ENCODE measurements at regions of chr13 and their contacts with region 1.

Region 1: DNA sequence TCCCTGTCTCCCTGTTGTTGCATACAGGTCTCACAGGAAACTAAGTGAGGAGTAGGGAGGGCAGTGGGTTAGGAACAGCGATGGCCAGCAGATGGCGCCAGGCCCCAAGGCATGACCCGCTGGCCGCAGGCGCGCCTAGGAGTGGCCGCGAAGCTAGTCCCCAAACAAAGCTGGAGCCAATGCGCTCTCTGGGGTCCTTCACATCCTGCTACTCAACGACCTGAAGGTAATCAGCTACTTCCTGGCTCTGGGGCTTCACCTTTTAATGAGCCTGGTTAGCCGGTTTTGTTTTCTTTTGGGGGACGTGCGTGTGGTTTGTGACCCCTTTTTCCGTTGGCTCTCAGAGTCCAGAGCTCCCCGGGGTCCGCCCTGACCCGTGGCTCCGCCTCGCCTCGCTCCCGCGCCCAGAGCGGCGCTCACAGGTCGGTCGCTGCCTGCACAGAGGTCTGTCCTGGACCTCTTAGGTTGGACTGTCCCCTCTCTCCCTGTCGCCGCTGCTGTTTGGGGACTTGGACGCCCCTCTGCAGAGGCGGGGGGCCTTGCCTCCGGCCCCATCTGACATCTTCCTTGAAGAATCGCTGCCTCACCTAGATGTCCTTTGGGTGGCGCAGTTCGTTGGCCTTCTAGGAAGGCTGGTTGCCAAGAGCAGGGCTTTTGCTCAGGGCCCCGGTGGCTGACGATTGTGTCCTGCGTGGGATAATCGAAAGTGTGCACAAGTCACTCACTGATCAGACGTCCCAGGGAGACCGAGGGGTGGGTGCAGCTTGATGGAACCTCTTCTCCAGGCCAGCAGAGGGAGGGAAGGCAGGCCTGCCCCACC is 62.1 kb upstream of the GTF3A start:
- DNase-seq: peak; percentile 83 to 96 (median 92)
- ATAC-seq: peak; percentile 94 to 98 (median 96)
- H3K4me3 ChIP-seq: peak overlapping the region; percentile 7 to 57 (median 32)
- H3K27ac ChIP-seq: peak overlapping the region in 3 of 4 donors; percentile 25 to 59 (median 48)
- H3K4me1 ChIP-seq: peaks cover 0 to 6% (median 5%) of the 10 kb centered on the region in 3 donors
- H3K27me3 ChIP-seq: no peaks in the 10 kb centered on the region
- CTCF ChIP-seq: peak; percentile 89 to 91 (median 90)

Region 2: DNA sequence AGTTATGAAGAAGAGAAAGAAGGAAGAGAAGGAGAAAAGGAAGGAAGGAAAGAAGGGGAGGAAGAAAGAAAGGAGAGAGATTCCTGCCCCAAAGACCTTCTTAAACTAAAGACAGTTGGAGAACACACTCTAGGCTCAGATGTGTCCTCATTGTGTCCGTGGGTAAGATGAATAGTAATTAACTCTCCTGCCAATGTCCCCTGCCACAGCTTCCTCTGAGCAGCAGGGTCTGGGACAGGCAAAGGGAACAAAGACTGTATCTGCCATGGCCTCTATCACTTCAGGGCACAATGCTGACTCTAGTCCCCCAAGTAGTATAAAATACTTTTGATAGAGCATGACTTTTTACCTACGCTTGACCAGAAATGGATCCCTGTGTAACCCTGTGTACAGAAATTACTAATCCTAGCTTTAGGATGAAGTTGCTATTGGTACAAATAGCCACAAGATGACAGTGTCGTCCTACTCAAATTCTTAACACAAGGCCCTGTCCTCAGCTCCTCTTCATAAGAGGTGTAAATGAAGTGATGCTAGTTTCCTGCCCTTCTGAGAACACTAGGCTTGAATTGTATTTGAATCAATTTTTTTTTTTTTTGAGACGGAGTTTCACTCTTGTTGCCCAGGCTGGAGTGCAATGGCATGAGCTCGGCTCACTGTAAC is 415.5 kb before region 1 on chr13:
- intact Hi-C with region 1: loop called in 1 of 3 experiments (anchors 10 kb)
- DNase-seq: peak in 1 of 6 donors; percentile 34
- ATAC-seq: peak; percentile 18 to 71 (median 67)
- H3K4me3 ChIP-seq: no peak overlapping the region
- H3K27ac ChIP-seq: no peak overlapping the region
- H3K4me1 ChIP-seq: peaks cover 18 to 21% (median 20%) of the 10 kb centered on the region in 3 donors
- H3K27me3 ChIP-seq: no peaks in the 10 kb centered on the region
- CTCF ChIP-seq: peak; percentile 54 to 75 (median 67)

Region 3: DNA sequence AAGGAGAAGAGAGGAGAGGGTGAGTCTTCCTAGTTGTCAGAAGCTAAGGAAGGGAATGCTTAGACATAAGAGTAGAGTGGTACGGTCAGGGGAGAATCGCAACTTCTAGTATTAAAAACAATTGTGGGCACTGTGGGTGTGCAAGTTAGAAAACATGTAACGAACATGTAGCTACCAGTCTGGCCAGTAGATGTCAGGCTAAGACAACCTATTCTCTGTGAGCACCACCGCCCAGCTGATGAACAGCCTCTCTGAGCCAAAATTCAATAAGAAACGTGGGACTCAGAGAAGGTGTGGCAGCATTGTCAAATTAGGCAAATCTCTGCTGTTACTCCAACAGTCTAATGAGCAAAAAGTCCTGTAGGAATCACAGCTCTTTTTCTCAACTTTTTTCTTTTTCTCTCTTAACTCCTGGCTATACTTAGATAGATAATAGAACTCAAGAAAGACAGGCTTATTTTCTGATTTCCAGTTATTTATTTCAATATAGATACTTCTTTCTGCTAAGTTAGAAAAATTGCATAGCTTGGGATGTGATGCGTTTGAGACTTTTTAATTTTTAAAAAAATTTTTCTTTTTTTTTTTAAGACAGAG is 376.9 kb before region 1 on chr13:
- intact Hi-C with region 1: loop called in 2 of 3 experiments (anchors 5 to 10 kb)
- DNase-seq: peak in 3 of 6 donors; percentile 65 to 81 (median 69)
- ATAC-seq: peak; percentile 49 to 83 (median 76)
- H3K4me3 ChIP-seq: no peak overlapping the region
- H3K27ac ChIP-seq: no peak overlapping the region
- H3K4me1 ChIP-seq: peaks cover 0 to 15% (median 2%) of the 10 kb centered on the region in 3 donors
- H3K27me3 ChIP-seq: no peaks in the 10 kb centered on the region
- CTCF ChIP-seq: peak; percentile 53 to 63 (median 54)

Region 4: DNA sequence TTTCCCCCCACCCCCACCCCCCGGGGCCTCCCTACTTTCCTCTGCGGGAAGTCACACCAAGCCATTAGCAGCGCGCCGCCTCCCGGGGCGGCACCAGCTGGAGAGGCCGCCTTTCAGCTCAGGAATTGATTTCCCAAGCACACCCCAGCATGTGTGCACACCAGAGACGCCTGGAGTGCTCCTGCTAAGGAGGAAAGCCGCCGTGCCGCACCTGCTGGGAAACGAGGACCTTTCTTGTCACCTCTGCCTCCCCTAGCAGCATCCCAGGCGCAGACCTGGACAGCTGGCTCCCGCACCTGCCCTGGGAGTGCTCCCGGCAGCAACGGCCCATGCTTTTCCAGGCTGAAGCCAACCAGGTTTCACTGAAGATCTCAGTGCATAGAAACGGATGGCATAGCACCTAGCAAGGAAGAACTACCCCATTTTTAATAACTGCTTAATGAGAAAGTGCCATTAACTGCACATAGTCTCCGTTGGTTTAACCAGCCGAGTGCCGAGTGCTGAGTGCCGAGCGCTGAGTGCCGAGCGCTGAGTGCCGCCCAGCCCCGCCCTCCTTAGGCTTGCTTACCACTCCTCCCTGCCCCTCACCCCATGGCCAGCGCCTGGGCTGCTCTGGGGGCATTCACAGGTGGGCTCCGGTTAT is 355.6 kb before region 1 on chr13:
- intact Hi-C with region 1: loop called in 1 of 3 experiments (anchors 10 kb)
- DNase-seq: peak; percentile 33 to 79 (median 42)
- ATAC-seq: peak; percentile 77 to 92 (median 90)
- H3K4me3 ChIP-seq: peak overlapping the region; percentile 12 to 46 (median 30)
- H3K27ac ChIP-seq: no peak overlapping the region
- H3K4me1 ChIP-seq: peaks cover 0 to 7% (median 0%) of the 10 kb centered on the region in 3 donors
- H3K27me3 ChIP-seq: no peaks in the 10 kb centered on the region
- CTCF ChIP-seq: no peak

Region 5: DNA sequence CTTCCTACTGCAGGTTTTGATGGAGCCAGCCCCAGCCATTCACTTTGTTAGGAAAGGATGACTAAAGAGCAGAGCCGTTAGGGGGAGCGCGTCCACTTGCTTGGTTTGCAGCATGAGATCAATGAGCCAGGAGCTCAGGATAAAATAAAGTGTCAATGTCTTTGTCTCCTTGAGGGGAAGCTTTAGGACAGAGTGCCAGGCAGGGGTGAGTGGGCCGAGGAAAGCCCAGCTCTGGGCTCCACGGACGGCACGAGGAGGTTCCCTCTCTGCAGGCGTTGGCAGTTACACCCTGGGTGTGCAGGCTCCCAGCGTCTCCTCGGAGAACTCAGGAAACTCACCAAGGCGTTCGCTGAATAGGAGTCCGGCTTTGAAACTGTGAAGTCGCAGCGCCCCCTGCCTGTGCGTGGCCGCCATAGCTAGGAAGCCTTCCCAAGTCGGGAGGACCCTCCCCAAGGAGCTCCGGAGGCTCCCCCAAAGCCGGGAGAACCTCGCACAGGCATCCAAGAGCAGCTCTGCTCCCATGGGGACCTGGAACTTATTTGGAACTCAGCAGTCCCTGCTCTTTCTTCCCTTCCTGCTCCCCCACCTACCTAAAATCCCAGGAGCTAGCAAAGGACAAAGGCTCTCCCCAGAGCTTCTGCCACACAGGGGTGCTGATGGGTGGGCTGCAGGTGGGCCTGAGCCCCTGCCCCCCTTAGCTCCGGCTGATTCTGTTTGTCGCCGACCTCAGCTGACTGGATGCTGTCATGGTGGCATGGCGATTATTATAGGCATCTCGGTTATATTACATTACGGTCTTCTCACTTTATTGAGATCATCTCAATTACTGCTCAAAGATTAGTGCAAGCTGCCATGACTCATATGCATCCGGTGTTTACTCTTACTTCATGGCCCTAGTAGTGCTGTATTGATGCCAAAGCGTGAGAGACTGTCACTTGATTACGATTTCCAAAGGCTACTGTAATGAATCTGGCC is 464.4 kb after region 1 on chr13:
- intact Hi-C with region 1: loop called in 2 of 3 experiments (anchors 5 kb)
- DNase-seq: peak; percentile 75 to 93 (median 84)
- ATAC-seq: peak; percentile 89 to 96 (median 94)
- H3K4me3 ChIP-seq: peak overlapping the region in 2 of 4 donors; percentile 16 to 36
- H3K27ac ChIP-seq: peak overlapping the region in 1 of 4 donors; percentile 13
- H3K4me1 ChIP-seq: peaks cover 0 to 4% (median 4%) of the 10 kb centered on the region in 3 donors
- H3K27me3 ChIP-seq: peaks cover 0 to 13% (median 8%) of the 10 kb centered on the region in 4 donors
- CTCF ChIP-seq: peak; percentile 84 to 96 (median 89)

Region 6: GRCh38 chr13:27980280-27980998 is 618.2 kb after region 1 on chr13:
- intact Hi-C with region 1: loop called in 2 of 3 experiments (anchors 10 kb)
- DNase-seq: peak in 2 of 6 donors; percentile 56 to 60
- ATAC-seq: peak in 3 of 4 donors; percentile 31 to 47 (median 32)
- H3K4me3 ChIP-seq: peak overlapping the region in 2 of 4 donors; percentile 8 to 18
- H3K27ac ChIP-seq: no peak overlapping the region
- H3K4me1 ChIP-seq: peaks cover 0 to 6% (median 4%) of the 10 kb centered on the region in 3 donors
- H3K27me3 ChIP-seq: peaks cover 0 to 18% (median 12%) of the 10 kb centered on the region in 4 donors
- CTCF ChIP-seq: no peak